Prostate gland (tissue), 2 donors: ENCODE measurements at regions of chrX and their contacts with region 1.

Region 1: GRCh38 chrX:13646154-13646549 is 6.8 kb upstream of the TCEANC start:
- DNase-seq: peak; percentile 23
- H3K4me3 ChIP-seq: no peak overlapping the region
- H3K27ac ChIP-seq: no peak overlapping the region
- H3K4me1 ChIP-seq: no peaks in the 10 kb centered on the region
- H3K27me3 ChIP-seq: no peaks in the 10 kb centered on the region
- CTCF ChIP-seq: peak; percentile 14 to 57 (median 48)
- POLR2A ChIP-seq: no peak

Region 2: DNA sequence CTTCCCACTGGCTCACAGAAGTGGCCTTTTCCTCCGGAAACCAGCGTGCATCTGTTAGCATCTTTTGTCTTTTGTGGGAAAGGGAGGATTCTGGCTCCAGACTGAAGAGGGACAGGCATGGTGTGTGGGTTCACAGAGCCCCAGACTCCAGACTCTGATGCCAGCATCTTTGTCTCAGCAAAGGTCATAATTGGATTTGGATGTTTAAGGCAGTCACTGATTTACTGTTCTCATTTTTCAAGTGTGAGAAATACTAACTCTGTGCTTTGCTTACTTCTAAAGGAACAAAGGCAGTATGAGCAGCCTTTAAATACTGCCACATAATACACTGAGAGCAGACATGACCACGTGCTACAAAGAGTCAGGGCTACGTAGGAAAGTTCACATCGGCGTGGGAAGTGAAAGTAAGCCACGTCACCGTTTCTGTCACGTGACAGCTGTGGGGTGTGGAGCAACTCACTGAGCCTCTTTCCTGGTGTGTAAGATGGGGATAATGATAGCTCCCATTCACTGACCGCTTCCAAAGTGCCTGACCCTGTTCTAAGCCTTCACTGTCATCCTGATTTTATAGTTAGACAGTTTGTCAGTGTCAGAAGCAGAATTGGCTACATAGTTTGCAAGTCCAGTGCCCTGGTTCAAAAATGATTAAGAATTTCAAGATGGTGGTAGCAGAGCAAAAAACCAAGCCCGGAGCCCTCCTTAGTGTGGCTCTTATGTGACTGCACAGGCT is 696.1 kb before region 1 on chrX:
- intact Hi-C with region 1: loop called (anchors 10 kb)
- DNase-seq: peak; percentile 44
- H3K4me3 ChIP-seq: no peak overlapping the region
- H3K27ac ChIP-seq: peak overlapping the region; percentile 38 to 42
- H3K4me1 ChIP-seq: no peaks in the 10 kb centered on the region
- H3K27me3 ChIP-seq: no peaks in the 10 kb centered on the region
- CTCF ChIP-seq: no peak
- POLR2A ChIP-seq: peak; percentile 39

Region 3: GRCh38 chrX:13506574-13506973 is 139.6 kb before region 1 on chrX:
- intact Hi-C with region 1: loop called (anchors 5 kb)
- DNase-seq: no peak
- H3K4me3 ChIP-seq: no peak overlapping the region
- H3K27ac ChIP-seq: no peak overlapping the region
- H3K4me1 ChIP-seq: no peaks in the 10 kb centered on the region
- H3K27me3 ChIP-seq: no peaks in the 10 kb centered on the region
- CTCF ChIP-seq: peak; percentile 32 to 71 (median 58)
- POLR2A ChIP-seq: no peak

Region 4: DNA sequence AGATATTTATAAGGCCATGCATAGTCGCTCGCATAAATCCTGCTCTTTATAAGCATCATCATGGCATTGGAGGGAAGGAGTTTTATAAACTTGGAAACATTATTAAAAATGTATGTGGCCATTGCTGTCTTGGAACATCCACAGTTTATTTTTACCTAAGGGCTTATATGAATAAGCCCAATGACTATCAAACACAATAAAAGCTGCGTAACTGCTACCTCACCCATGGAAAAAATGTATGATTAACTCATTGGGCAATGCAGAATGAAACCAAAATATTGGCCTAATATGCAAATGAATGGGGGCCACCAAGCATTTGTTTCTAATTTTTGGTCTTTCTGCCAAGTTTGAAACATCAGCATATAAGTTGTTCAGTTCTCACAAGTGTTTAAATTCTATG is 364.4 kb after region 1 on chrX:
- intact Hi-C with region 1: no loop called
- DNase-seq: no peak
- H3K4me3 ChIP-seq: no peak overlapping the region
- H3K27ac ChIP-seq: no peak overlapping the region
- H3K4me1 ChIP-seq: no peaks in the 10 kb centered on the region
- H3K27me3 ChIP-seq: no peaks in the 10 kb centered on the region
- CTCF ChIP-seq: no peak
- POLR2A ChIP-seq: no peak